ENCODE measurements at regions of chr17 and their contacts with region 1.

Region 1: DNA sequence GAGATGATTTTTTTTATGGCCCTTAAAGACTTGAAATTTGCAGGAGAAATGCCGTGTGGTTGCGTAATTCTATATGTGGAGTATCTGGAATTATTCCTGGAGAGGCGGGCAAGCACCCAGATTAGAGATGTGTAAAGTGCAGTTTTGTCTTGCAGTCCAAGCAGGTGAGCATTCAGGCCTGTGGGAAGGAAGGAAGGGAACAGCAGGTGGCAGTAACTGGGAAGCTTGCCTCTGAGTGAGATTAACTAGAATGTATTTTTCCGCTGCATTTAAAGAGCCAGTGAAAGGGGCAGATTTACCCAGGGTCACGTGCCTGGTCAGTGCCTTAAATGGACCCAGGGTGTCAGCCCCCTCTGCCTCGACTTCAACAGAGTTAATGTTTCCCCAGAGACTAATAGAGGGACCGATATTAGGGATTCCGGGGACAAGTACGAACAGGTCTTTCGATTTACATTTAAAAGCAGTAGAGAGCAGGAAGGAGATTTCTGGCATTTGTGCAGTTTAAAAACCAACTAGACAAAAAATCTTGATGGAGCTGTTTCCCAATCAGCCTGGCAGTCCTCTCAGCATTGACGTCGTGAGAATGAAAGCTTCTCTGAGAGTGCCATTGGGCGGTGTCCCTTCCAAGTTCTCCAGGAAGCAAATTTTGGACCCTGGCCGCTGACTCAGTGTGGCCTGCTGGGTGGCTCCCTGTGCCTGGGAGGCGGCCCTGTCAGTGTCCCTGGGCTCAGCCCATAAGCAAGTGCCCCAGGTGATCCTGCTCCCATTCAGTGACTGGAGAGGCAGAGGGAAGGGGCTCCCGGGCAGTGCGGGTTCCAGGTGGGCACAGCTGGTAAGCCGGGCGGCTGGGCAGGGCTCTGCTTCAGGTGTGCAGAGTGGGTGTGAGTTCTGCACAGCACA is 38.2 kb downstream of the KSR1 start:
- DNase-seq: peak; percentile 82 to 87
- ATAC-seq: peak; percentile 79 to 90 (median 88)
- H3K4me3 ChIP-seq: peak overlapping the region; percentile 55
- H3K27ac ChIP-seq: peak overlapping the region; percentile 79
- H3K4me1 ChIP-seq: peaks cover 20% of the 10 kb centered on the region
- H3K27me3 ChIP-seq: no peaks in the 10 kb centered on the region
- CTCF ChIP-seq: peak; percentile 61

Region 2: GRCh38 chr17:27245230-27245696 is 249.2 kb before region 1 on chr17:
- intact Hi-C with region 1: loop called in 1 of 2 experiments (anchors 10 kb)
- DNase-seq: peak; percentile 87 to 92
- ATAC-seq: peak; percentile 92 to 97 (median 96)
- H3K4me3 ChIP-seq: peak overlapping the region; percentile 43
- H3K27ac ChIP-seq: peak overlapping the region; percentile 89
- H3K4me1 ChIP-seq: peaks cover 34% of the 10 kb centered on the region
- H3K27me3 ChIP-seq: no peaks in the 10 kb centered on the region
- CTCF ChIP-seq: peak; percentile 66

Region 3: DNA sequence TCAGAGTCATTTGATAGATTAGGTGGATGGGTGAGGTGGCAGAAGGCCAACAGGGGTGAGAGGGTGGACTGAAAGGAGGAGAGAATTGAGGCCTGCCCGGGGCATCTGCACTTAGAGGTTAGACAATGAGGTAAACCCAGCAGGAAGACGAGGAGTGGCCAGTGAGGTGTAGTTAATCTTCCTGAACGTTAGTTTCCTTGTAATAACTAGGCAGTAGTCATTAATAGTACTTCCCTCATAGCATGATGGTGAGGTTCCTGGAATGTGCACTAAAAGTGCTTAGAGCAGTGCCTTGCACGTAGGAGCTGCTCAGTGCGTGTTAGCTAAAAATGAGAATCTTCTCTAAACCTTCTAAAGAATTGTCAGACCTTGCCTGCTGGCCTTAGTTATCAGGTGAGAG is 51.7 kb before region 1 on chr17:
- intact Hi-C with region 1: no loop called
- DNase-seq: no peak
- ATAC-seq: no peak
- H3K4me3 ChIP-seq: no peak overlapping the region
- H3K27ac ChIP-seq: no peak overlapping the region
- H3K4me1 ChIP-seq: no peaks in the 10 kb centered on the region
- H3K27me3 ChIP-seq: no peaks in the 10 kb centered on the region
- CTCF ChIP-seq: no peak

Region 4: DNA sequence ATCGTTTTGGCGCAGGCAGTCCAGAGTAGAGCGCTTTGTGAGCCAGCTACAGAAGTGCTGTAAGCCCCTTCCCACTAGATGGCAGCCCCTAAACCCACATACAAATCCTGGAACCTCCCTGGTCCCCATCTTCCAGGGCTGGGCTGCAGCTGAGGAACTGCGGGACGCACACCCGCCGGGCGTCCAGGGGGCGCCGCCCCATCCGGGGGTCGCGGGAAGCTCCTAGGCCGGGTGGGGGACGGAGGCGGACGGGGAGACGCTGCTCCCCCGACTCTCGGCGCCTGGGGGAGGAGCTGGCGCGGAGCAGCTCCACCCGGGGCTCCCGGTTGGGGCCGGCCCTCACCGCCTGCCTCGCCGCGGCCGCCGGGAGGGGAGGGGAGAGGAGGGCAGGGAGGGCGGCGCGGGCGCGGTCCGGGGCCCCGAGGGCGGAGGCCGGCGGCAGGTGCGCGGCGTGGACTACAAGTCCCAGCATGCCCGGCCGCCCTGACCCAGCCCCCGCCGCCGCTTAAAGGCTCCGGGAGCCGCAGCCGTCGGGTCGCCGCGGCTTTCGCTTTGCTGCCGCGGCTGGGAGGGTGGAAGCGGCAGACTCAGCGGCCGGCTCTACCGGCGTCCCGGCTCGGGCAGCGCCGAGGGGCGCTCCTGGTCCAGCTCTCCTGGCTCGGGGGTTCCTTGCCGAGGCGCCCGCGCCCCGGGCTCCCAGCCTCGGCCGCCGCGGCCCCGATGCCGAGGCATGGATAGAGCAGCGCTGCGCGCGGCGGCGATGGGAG is 38.3 kb before region 1 on chr17 and contains the start of gene KSR1:
- intact Hi-C with region 1: loop called in 1 of 2 experiments (anchors 5 kb)
- DNase-seq: peak; percentile 85 to 87
- ATAC-seq: peak; percentile 94 to 96 (median 96)
- H3K4me3 ChIP-seq: peak within 1 kb of the TSS; percentile 87
- H3K27ac ChIP-seq: peak within 1 kb of the TSS; percentile 74
- H3K4me1 ChIP-seq: peaks cover 7% of the 10 kb centered on the region
- H3K27me3 ChIP-seq: no peaks in the 10 kb centered on the region
- CTCF ChIP-seq: peak; percentile 14
- total RNA-seq, gene KSR1: 46.5 to 93.0 (median 70.7) TPM

Region 5: GRCh38 chr17:27544350-27545131 is 50.1 kb after region 1 on chr17:
- intact Hi-C with region 1: loop called in 1 of 2 experiments (anchors 5 kb)
- DNase-seq: no peak
- ATAC-seq: no peak
- H3K4me3 ChIP-seq: no peak overlapping the region
- H3K27ac ChIP-seq: no peak overlapping the region
- H3K4me1 ChIP-seq: peaks cover 15% of the 10 kb centered on the region
- H3K27me3 ChIP-seq: no peaks in the 10 kb centered on the region
- CTCF ChIP-seq: no peak

Region 6: DNA sequence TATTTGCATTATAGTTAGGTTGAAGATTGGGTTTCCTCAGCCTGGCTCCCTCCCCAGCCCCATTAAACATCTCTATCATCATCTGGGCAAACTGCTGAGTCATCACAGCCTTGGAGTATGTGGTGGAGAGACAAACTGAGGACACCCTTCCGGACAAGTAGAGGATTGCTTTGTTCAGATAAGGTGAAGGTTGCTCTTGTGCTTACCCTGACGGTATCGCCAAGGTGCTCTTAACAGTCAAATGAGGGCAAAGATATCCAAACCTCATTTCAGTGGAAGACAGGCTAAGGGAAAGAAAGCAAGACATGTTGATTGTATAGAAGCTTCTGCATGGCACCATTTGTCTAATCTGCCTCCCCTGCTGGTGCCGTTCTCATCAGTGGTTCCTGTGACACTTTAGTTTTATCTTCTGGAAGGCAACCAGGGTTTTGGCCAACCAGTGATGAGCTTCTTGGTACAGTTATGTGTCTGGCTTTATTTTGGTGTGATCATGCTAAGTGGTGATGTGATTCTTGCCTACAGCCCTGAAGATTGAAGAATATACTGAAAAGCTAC is 79.6 kb after region 1 on chr17:
- intact Hi-C with region 1: loop called in 1 of 2 experiments (anchors 5 kb)
- DNase-seq: peak in 1 of 2 donors; percentile 12
- ATAC-seq: peak in 1 of 4 donors; percentile 9
- H3K4me3 ChIP-seq: no peak overlapping the region
- H3K27ac ChIP-seq: peak overlapping the region; percentile 94
- H3K4me1 ChIP-seq: peaks cover 63% of the 10 kb centered on the region
- H3K27me3 ChIP-seq: no peaks in the 10 kb centered on the region
- CTCF ChIP-seq: no peak

Region 7: GRCh38 chr17:27601069-27601975 is 106.9 kb after region 1 on chr17:
- intact Hi-C with region 1: loop called (anchors 1 to 5 kb)
- DNase-seq: peak; percentile 66 to 81
- ATAC-seq: peak; percentile 59 to 76 (median 60)
- H3K4me3 ChIP-seq: no peak overlapping the region
- H3K27ac ChIP-seq: peak overlapping the region; percentile 7
- H3K4me1 ChIP-seq: no peaks in the 10 kb centered on the region
- H3K27me3 ChIP-seq: no peaks in the 10 kb centered on the region
- CTCF ChIP-seq: peak; percentile 96

Measured in psoas muscle (tissue), 8 donors.